GM12878 (cell line): ENCODE measurements at regions of chr2 and their contacts with region 1.

Region 1: DNA sequence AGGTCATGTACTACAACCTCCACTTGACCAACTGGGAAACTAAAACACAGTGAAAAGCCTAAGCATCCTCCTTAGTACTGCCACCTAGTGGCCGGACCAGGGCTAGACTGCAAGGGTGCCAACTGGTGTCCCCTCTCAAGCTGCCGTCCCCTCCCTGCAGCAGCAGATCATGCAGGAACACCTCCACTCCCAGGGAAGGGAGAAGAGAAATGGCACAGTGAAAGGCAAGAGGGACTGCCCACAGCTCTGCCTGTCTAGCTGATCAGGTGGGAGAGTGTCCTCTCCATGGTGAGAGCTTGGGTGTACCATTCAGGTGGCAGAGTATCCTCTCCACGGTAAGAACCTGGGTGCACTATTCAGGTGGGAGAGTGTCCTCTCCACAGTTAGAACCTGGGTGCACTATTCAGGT is 78.1 kb downstream of the AAK1 start:
- DNase-seq: peak; percentile 40
- ATAC-seq: peak; percentile 99
- H3K4me3 ChIP-seq: no peak overlapping the region
- H3K27ac ChIP-seq: no peak overlapping the region
- H3K4me1 ChIP-seq: 0 out of 2 replicates have a peak, but pooled peaks cover 2% of the 10 kb centered on the region
- H3K27me3 ChIP-seq: no peaks in the 10 kb centered on the region
- CTCF ChIP-seq: peak; percentile 83 to 97 (median 89)
- EP300 ChIP-seq: no peak
- POLR2A ChIP-seq: no peak
- RAD21 ChIP-seq: peak; percentile 71

Region 2: DNA sequence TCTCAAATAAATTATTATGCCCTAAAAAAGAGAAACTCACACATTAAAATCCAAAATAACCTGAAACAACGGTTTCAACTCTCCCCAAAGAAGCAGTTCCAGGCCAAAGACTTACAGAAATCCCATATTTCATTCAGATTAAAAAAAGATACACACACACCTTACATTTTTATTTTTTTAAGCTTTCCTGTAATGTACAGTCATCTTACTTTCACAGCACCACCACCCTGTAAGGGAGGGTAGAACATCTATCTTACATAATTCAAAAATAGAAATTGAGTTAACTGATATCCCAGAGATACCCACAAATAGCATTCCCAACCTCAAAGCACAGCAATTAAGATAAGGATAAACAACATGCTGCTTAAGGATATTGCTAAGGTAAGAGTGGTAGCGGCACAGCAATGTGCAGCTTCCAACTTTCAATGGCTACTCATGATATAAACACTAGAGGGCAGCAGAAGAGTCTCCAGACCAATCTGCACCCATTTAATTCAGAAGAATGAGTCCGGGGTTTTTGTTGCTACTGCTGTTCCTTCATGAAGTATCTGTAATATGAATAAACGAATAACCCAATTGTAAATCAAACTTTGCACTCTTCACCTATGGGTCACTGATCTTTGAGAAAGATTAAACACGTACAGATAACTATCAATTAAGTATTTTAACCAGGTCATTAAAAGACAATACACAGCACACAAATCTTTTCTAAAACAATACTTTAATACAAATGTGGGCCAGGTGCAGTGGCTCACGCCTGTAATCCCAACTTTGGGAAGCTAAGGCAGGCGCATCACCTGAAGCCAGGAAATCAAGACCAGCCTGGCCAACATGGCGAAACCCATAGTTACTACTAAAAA is 189.7 kb before region 1 on chr2:
- CTCF ChIA-PET with region 1: interaction called, 91 read pairs
- POLR2A ChIA-PET with region 1: no interaction called
- RAD21 ChIA-PET with region 1: interaction called, 46 read pairs
- SMC1A ChIA-PET with region 1: interaction called, 48 read pairs
- in situ Hi-C with region 1: no loop called
- intact Hi-C with region 1: no loop called
- DNase-seq: no peak
- ATAC-seq: peak; percentile 90
- H3K4me3 ChIP-seq: no peak overlapping the region
- H3K27ac ChIP-seq: no peak overlapping the region
- H3K4me1 ChIP-seq: no peaks in the 10 kb centered on the region
- H3K27me3 ChIP-seq: no peaks in the 10 kb centered on the region
- CTCF ChIP-seq: peak; percentile 49 to 63 (median 62); a peak in 5 of 6 replicates
- EP300 ChIP-seq: no peak
- POLR2A ChIP-seq: no peak
- RAD21 ChIP-seq: peak; percentile 61

Region 3: GRCh38 chr2:69525261-69525660 is 40.2 kb before region 1 on chr2:
- CTCF ChIA-PET with region 1: interaction called, 15 read pairs
- POLR2A ChIA-PET with region 1: no interaction called
- RAD21 ChIA-PET with region 1: no interaction called
- SMC1A ChIA-PET with region 1: interaction called, 7 read pairs
- in situ Hi-C with region 1: no loop called
- intact Hi-C with region 1: no loop called
- DNase-seq: no peak
- ATAC-seq: no peak
- H3K4me3 ChIP-seq: no peak overlapping the region
- H3K27ac ChIP-seq: no peak overlapping the region
- H3K4me1 ChIP-seq: no peaks in the 10 kb centered on the region
- H3K27me3 ChIP-seq: no peaks in the 10 kb centered on the region
- CTCF ChIP-seq: no peak
- EP300 ChIP-seq: no peak
- POLR2A ChIP-seq: no peak
- RAD21 ChIP-seq: no peak

Region 4: DNA sequence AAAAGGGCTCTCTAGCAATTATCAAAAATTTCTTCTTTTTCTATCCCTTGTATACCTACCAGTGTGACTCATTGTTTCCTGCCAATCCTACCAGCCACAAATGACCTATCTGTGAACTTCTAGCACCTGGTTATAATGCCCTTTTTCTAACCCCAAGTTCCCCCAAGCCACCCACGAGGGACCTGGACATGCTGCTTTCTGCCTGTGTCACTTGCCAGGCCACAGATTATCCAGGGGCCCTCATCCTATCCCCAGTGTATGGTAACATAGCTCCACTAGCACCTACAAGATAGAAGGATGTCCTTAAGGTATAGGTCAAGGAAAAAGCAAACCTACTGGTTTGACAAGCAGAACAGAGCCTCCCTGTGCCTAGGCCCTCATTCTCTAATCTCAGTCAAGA is 51.3 kb after region 1 on chr2:
- CTCF ChIA-PET with region 1: interaction called, 21 read pairs
- POLR2A ChIA-PET with region 1: no interaction called
- RAD21 ChIA-PET with region 1: interaction called, 5 read pairs
- SMC1A ChIA-PET with region 1: interaction called, 5 read pairs
- in situ Hi-C with region 1: no loop called
- intact Hi-C with region 1: no loop called
- DNase-seq: no peak
- ATAC-seq: peak; percentile 76
- H3K4me3 ChIP-seq: no peak overlapping the region; the same call in 1 of the 2 replicates
- H3K27ac ChIP-seq: peak overlapping the region; percentile 1; the same call in 1 of the 2 replicates
- H3K4me1 ChIP-seq: peaks cover 34% of the 10 kb centered on the region
- H3K27me3 ChIP-seq: no peaks in the 10 kb centered on the region
- CTCF ChIP-seq: no peak
- EP300 ChIP-seq: no peak
- POLR2A ChIP-seq: no peak
- RAD21 ChIP-seq: no peak

Region 5: GRCh38 chr2:69652221-69652651 is 86.8 kb after region 1 on chr2:
- CTCF ChIA-PET with region 1: interaction called, 44 read pairs
- POLR2A ChIA-PET with region 1: interaction called, 6 read pairs
- RAD21 ChIA-PET with region 1: no interaction called
- SMC1A ChIA-PET with region 1: interaction called, 11 read pairs
- in situ Hi-C with region 1: no loop called
- intact Hi-C with region 1: no loop called
- DNase-seq: no peak
- ATAC-seq: no peak
- H3K4me3 ChIP-seq: no peak overlapping the region
- H3K27ac ChIP-seq: no peak overlapping the region
- H3K4me1 ChIP-seq: peaks cover 18% of the 10 kb centered on the region
- H3K27me3 ChIP-seq: no peaks in the 10 kb centered on the region
- CTCF ChIP-seq: no peak
- EP300 ChIP-seq: no peak
- POLR2A ChIP-seq: no peak
- RAD21 ChIP-seq: no peak

Region 6: DNA sequence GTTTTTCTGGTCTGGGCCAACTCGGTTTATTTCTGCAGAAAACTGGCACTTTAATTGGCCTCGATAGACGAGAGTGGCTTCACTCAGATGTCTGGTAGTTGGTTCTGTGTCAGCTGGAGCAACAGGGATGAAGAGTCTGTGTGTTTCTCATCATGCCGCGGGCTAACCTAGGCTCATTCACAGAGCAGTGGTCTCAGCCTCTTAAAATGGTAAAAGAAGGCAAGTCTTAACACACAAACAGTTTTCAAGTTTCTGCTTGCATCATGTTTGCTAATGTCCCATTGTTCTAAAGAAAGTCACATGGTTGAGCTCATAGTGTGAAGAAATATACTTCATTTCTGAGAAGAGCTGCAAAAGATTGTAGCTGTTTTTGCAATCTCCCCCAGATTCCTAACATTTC is 139.0 kb after region 1 on chr2:
- CTCF ChIA-PET with region 1: interaction called, 12 read pairs
- POLR2A ChIA-PET with region 1: interaction called, 3 read pairs
- RAD21 ChIA-PET with region 1: no interaction called
- SMC1A ChIA-PET with region 1: interaction called, 5 read pairs
- in situ Hi-C with region 1: no loop called
- intact Hi-C with region 1: no loop called
- DNase-seq: no peak
- ATAC-seq: no peak
- H3K4me3 ChIP-seq: no peak overlapping the region
- H3K27ac ChIP-seq: no peak overlapping the region
- H3K4me1 ChIP-seq: no peaks in the 10 kb centered on the region; the same call in 1 of the 2 replicates
- H3K27me3 ChIP-seq: no peaks in the 10 kb centered on the region
- CTCF ChIP-seq: no peak
- EP300 ChIP-seq: no peak
- POLR2A ChIP-seq: no peak
- RAD21 ChIP-seq: no peak

Region 7: DNA sequence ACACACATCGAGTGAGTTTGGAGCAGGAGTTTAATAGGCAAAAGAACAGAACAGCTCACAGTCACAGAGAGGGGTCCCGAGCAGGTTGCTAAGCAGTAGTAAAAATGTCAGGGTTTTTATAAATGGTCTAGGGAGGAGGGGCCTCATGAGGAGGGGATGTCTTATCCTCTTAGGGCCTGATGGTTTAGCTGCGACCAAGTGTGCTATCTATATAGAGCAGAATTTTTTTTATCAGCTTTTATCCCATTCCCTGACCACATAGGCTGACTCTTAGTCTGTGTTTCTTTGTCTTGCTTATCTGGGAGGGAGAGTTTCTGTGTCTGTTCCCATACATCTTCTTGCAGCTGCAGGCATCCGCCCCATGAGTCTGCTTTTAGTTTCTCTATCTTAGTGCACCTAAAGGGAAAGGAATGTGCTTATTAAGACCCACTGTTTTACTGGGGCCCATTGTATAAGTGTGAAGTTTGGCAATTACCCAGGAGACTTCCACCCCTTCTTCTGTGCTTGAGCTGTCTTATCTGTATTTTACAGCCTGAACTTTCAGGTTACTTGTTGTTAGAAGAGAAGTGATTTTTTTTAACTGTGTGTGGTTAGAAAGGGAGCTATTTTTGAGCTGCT is 233.6 kb after region 1 on chr2:
- CTCF ChIA-PET with region 1: interaction called, 14 read pairs
- POLR2A ChIA-PET with region 1: no interaction called
- RAD21 ChIA-PET with region 1: no interaction called
- SMC1A ChIA-PET with region 1: interaction called, 3 read pairs
- in situ Hi-C with region 1: loop called (anchors 25 kb)
- intact Hi-C with region 1: no loop called
- DNase-seq: no peak
- ATAC-seq: peak; percentile 68
- H3K4me3 ChIP-seq: peak overlapping the region; percentile 69
- H3K27ac ChIP-seq: peak overlapping the region; percentile 77
- H3K4me1 ChIP-seq: peaks cover 69% of the 10 kb centered on the region
- H3K27me3 ChIP-seq: no peaks in the 10 kb centered on the region
- CTCF ChIP-seq: no peak
- EP300 ChIP-seq: no peak
- POLR2A ChIP-seq: no peak
- RAD21 ChIP-seq: no peak